Esophagus muscularis mucosa (tissue), 4 donors: ENCODE measurements at regions of chr2 and their contacts with region 1.

Region 1: DNA sequence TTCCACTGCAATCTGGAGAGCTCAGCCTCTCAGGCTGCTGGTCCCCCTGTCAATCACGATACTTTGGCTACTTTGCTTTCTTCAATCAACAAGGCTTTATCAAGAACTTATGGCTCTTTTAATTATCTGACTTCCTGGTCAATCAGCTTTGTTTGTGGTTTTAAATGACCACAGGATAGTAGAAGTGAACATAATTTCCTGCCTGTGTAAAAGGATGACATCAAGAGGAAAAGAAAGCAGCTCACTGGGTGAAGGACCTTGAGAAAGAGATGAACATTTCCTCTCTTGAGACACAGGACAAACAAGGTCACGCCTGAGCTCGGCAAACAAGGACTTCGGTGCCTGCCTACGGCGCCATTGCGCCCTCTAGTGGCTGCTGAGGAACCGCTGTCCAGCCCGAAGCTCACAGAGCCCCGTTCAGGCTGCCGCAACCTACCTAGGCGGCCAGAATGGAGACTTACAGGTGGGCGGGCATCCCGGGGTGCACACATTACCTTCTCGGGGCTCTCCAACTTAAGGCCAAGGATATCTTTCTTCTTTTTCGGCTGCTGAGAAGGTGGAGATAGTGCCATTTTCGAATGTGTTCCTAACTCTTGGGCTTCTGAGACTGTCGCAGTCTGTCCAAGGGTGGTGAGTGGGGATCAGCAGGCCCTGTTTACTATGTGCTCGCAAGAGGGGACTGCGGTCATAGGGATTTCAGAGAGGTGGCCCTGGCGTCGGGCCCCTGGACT is 54.0 kb downstream of the IL1RL2 start:
- DNase-seq: peak; percentile 96
- H3K4me3 ChIP-seq: peak overlapping the region in 2 of 4 donors; percentile 3
- H3K27ac ChIP-seq: peak overlapping the region; percentile 32 to 77 (median 60)
- H3K4me1 ChIP-seq: peaks cover 4 to 21% (median 10%) of the 10 kb centered on the region in 4 donors
- H3K27me3 ChIP-seq: no peaks in the 10 kb centered on the region
- CTCF ChIP-seq: peak; percentile 94 to 98 (median 96)
- EP300 ChIP-seq: no peak
- POLR2A ChIP-seq: no peak

Region 2: DNA sequence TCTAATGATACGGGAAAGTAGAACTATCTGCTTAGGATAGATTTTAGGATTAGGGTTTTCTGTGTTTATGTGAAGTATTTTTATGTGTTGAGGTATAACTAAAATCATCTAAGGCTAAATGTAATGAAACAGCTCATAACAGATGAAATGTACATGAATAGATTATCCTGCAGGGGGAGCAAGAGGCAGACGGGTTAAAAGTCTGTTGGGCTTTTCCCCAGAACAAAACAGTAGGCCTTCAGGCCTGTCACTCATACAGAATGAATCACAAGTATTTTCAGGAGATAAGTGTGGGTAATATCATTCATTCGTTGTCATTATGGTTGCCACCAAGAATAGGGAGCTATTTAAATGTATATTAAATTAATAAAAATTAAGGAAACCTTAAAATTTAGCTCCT is 356.9 kb before region 1 on chr2:
- intact Hi-C with region 1: loop called (anchors 5 kb)
- DNase-seq: no peak
- H3K4me3 ChIP-seq: no peak overlapping the region
- H3K27ac ChIP-seq: no peak overlapping the region
- H3K4me1 ChIP-seq: peaks cover 0 to 11% (median 0%) of the 10 kb centered on the region in 4 donors
- H3K27me3 ChIP-seq: no peaks in the 10 kb centered on the region
- CTCF ChIP-seq: peak; percentile 36 to 55 (median 50)
- EP300 ChIP-seq: no peak
- POLR2A ChIP-seq: no peak

Region 3: GRCh38 chr2:102020596-102021181 is 220.1 kb before region 1 on chr2:
- intact Hi-C with region 1: loop called (anchors 1 kb)
- DNase-seq: peak; percentile 98
- H3K4me3 ChIP-seq: no peak overlapping the region
- H3K27ac ChIP-seq: peak overlapping the region in 1 of 4 donors; percentile 52
- H3K4me1 ChIP-seq: peaks cover 10 to 19% (median 14%) of the 10 kb centered on the region in 4 donors
- H3K27me3 ChIP-seq: no peaks in the 10 kb centered on the region
- CTCF ChIP-seq: peak in 2 of 3 experiments; percentile 94 to 99
- EP300 ChIP-seq: no peak
- POLR2A ChIP-seq: no peak

Region 4: DNA sequence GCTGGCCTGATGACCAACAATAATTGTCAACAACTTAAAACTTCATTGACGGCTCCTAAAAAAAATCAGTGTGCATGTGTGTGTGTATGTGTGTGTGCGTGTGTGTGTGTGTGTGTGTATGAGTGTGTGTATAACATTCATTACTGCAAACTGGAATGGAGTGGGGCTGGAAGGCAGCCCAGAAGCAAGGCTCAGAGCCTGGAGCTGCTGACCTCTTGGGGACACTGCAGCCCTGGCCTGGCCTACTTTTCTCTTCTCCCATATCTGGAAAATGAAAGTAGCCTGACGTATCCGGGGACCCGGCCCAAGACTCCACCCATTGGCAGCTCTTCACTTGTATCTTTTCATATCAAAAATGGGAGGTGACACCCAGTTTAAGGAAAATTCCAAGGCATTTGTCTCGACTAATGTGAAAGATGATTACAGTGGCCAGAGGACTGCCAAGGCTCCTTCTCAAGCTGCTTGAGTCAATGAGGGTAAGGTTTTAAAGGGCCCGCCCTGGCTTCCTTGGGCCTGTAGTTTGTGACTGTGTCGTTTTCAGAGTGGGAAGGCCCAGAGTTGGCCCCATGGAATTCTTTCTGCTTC is 170.7 kb before region 1 on chr2:
- intact Hi-C with region 1: no loop called
- DNase-seq: no peak
- H3K4me3 ChIP-seq: peak overlapping the region in 1 of 4 donors; percentile 22
- H3K27ac ChIP-seq: peak overlapping the region; percentile 40 to 75 (median 58)
- H3K4me1 ChIP-seq: peaks cover 27 to 28% (median 27%) of the 10 kb centered on the region in 4 donors
- H3K27me3 ChIP-seq: no peaks in the 10 kb centered on the region
- CTCF ChIP-seq: peak in 1 of 3 experiments; percentile 13
- EP300 ChIP-seq: no peak
- POLR2A ChIP-seq: no peak

Region 5: DNA sequence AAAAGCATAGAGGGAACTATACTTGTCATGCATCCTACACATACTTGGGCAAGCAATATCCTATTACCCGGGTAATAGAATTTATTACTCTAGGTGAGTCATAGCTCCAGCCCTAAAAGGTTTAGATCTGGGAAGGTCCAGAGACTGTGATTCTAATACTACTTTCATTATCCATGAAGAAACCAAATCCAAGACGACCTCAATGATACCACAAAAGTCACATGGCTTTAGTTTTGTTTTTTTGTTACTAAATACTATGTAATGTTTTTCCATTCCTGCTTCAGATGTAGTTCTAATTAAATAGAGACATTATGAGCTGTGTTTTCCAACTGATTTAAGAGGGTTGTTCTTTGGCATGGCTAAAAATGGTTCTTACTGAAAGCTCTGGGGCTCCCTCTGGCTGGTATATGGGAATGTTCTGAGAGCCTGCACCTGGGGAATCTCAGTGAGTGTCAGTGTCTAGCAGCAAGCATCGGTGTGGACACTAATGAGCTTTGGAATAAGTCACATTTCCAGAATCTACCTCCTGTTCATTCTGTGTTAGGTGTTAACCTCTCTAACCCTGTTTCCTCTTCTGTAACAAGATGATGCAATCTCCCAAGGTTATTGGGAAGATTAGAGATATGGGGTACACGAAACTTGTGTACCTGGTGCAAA is 74.5 kb before region 1 on chr2:
- intact Hi-C with region 1: no loop called
- DNase-seq: no peak
- H3K4me3 ChIP-seq: no peak overlapping the region
- H3K27ac ChIP-seq: no peak overlapping the region
- H3K4me1 ChIP-seq: peaks cover 0 to 10% (median 3%) of the 10 kb centered on the region in 4 donors
- H3K27me3 ChIP-seq: no peaks in the 10 kb centered on the region
- CTCF ChIP-seq: peak; percentile 42 to 67 (median 65)
- EP300 ChIP-seq: no peak
- POLR2A ChIP-seq: no peak

Region 6: GRCh38 chr2:102187496-102188150 is 53.2 kb before region 1 on chr2:
- intact Hi-C with region 1: loop called (anchors 5 kb)
- DNase-seq: no peak
- H3K4me3 ChIP-seq: peak overlapping the region; percentile 56 to 61 (median 58)
- H3K27ac ChIP-seq: peak overlapping the region; percentile 42 to 48 (median 46)
- H3K4me1 ChIP-seq: peaks cover 6 to 16% (median 14%) of the 10 kb centered on the region in 4 donors
- H3K27me3 ChIP-seq: peaks cover 0 to 12% (median 0%) of the 10 kb centered on the region in 4 donors
- CTCF ChIP-seq: peak; percentile 15 to 44 (median 16)
- EP300 ChIP-seq: no peak
- POLR2A ChIP-seq: no peak

Region 7: GRCh38 chr2:102366406-102367112 is 125.8 kb after region 1 on chr2:
- intact Hi-C with region 1: no loop called
- DNase-seq: no peak
- H3K4me3 ChIP-seq: no peak overlapping the region
- H3K27ac ChIP-seq: no peak overlapping the region
- H3K4me1 ChIP-seq: no peaks in the 10 kb centered on the region
- H3K27me3 ChIP-seq: no peaks in the 10 kb centered on the region
- CTCF ChIP-seq: no peak
- EP300 ChIP-seq: no peak
- POLR2A ChIP-seq: no peak

Region 8: GRCh38 chr2:102540641-102541281 is 300.0 kb after region 1 on chr2:
- intact Hi-C with region 1: no loop called
- DNase-seq: peak; percentile 70
- H3K4me3 ChIP-seq: no peak overlapping the region
- H3K27ac ChIP-seq: no peak overlapping the region
- H3K4me1 ChIP-seq: no peaks in the 10 kb centered on the region
- H3K27me3 ChIP-seq: no peaks in the 10 kb centered on the region
- CTCF ChIP-seq: no peak
- EP300 ChIP-seq: no peak
- POLR2A ChIP-seq: no peak